A673 (cell line): ENCODE measurements at regions of chr22 and their contacts with region 1.

Region 1: DNA sequence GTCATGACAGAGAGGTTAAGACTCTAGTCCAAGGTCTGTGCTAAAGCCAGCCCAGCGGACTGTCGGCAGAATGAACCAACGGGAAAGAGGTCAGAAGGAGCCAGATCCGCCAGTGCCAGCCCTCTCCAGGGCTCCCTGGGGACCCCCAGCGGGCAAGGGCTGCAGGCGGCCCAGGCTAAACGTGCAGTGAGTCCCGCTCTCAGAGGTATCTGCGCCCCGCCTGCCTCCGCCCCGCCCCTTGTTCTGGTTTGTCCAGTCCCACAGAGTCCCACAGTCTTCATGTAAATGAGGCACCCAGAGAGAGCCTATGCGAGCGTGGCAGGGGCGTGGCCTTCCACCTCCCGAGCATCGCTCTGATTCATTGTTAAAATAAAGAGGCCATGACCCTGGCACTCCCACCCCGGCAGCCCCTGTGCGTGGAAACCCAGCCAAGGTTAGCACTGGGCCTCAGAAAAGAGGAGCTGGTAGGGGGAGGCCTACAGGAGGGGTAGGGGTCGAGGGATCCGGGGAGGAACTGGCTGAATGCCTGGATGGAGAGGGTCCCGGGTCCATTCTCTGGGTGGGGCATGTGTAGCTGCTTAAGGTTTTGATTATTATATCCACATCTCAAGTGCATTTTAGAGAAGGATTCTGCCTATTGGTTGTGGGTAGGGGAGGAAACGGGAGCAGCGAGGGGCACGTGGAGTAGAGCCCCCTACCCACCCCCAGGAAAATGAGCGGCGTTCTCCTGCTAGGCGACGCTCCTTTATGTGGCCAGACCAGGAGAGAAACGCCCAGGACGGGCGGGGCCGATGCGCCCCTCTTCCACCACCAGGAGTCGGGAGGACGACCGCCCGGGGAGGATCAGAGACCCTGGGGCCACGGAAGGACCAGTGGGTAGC is at the start of gene TRIOBP:
- DNase-seq: peak; percentile 98
- H3K4me3 ChIP-seq: peak within 1 kb of the TSS; percentile 39
- H3K27ac ChIP-seq: no peak within 1 kb of the TSS
- H3K4me1 ChIP-seq: peaks cover 5% of the 10 kb centered on the region
- H3K27me3 ChIP-seq: no peaks in the 10 kb centered on the region
- CTCF ChIP-seq: peak; percentile 56
- total RNA-seq, gene TRIOBP: 28.7 and 35.1 TPM in 2 replicates

Region 2: DNA sequence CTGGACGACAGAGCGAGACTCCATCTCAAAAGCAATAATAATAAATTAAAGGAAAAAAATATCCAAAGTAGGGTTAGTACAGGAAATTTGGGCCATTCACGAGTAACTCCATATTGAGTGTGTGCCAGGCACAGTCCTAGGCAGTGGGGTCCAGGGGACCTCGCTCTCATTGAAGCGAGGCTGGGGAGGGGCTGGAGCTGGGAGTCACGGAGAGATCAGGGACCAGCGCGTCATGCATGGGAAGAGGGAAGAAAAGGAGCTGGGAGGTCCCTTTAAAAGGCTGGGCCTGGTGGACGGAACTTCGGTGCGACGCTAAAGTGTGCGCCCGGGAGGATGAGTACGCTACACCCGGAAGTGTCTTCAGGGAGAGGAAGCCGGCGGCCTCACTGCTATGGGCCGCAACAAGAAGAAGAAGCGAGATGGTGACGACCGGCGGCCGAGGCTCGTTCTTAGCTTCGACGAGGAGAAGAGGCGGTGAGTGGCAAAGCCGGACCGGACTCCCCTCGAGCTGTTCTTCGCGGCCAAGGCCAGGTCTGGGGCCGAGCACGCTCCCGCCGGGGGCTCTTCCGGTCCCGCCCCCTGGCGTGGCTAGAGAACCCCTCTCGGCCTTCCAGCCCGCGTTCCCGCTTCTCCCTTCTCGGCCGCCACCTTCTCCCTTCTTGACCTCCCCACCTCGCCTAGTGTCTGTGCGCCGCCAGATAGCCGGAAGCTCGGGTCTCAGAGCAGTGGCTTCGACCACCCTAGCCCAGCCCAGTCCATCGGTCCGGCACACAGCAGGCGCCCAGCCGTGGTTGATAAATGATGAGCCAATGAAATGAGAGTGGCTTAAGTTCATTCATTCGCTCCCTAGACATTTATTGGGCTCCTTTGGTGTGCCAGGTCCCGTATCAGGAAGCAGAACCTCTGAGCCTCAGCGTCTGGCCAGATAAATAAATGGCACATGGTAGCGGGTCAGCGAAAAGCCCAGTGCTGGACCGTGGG is 10.6 kb before region 1 on chr22 and contains the start of gene NOL12:
- CTCF ChIA-PET with region 1: interaction called, 18 read pairs
- POLR2A ChIA-PET with region 1: no interaction called
- intact Hi-C with region 1: no loop called
- DNase-seq: peak; percentile 93
- H3K4me3 ChIP-seq: peak within 1 kb of the TSS; percentile 92
- H3K27ac ChIP-seq: peak within 1 kb of the TSS; percentile 89
- H3K4me1 ChIP-seq: peaks cover 7% of the 10 kb centered on the region
- H3K27me3 ChIP-seq: no peaks in the 10 kb centered on the region
- CTCF ChIP-seq: no peak
- total RNA-seq, gene NOL12: 51.9 and 52.9 TPM in 2 replicates